Caco-2 (cell line): ENCODE measurements at regions of chr12 and their contacts with region 1.

Region 1: GRCh38 chr12:80925983-80926382 is 11.8 kb downstream of the LIN7A start:
- DNase-seq: no peak
- H3K4me3 ChIP-seq: no peak overlapping the region
- H3K4me3 Mint-ChIP-seq: peak overlapping the region; percentile 0
- H3K27ac Mint-ChIP-seq: no peak overlapping the region
- H3K4me1 ChIP-seq: peaks cover 18% of the 10 kb centered on the region
- H3K4me1 Mint-ChIP-seq: peaks cover 12% of the 10 kb centered on the region
- H3K27me3 ChIP-seq: no peaks in the 10 kb centered on the region
- H3K27me3 Mint-ChIP-seq: no peaks in the 10 kb centered on the region
- CTCF ChIP-seq: no peak

Region 2: GRCh38 chr12:80936498-80937390 is 10.8 kb after region 1 on chr12:
- CTCF ChIA-PET with region 1: no interaction called
- POLR2A ChIA-PET with region 1: no interaction called
- intact Hi-C with region 1: loop called (anchors 1 kb)
- DNase-seq: peak; percentile 42 to 58
- H3K4me3 ChIP-seq: peak overlapping the region; percentile 84
- H3K4me3 Mint-ChIP-seq: peak overlapping the region; percentile 86
- H3K27ac Mint-ChIP-seq: peak overlapping the region; percentile 69
- H3K4me1 ChIP-seq: no peaks in the 10 kb centered on the region
- H3K4me1 Mint-ChIP-seq: peaks cover 7% of the 10 kb centered on the region
- H3K27me3 ChIP-seq: no peaks in the 10 kb centered on the region
- H3K27me3 Mint-ChIP-seq: peaks cover 2% of the 10 kb centered on the region
- CTCF ChIP-seq: peak in 1 of 2 experiments; percentile 3

Region 3: DNA sequence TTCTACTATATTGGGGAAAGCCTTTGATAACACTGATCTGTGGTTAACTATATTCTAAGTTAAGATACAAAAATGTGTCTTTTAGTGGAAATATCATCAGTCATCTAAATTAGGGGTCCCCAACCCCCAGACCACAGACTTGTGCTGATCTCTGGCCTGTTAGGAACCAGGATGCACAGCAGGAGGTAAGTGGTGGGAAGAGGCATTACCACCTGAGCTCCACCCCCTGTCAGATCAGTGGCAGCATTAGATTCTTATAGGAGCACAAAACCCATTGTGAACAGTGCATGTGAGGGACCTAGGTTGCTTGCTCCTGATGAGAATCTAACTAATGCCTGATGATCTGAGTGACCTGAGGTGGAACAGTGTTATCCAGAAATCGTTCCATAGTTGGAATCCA is 40.0 kb after region 1 on chr12:
- CTCF ChIA-PET with region 1: no interaction called
- POLR2A ChIA-PET with region 1: no interaction called
- intact Hi-C with region 1: no loop called
- DNase-seq: no peak
- H3K4me3 ChIP-seq: no peak overlapping the region
- H3K4me3 Mint-ChIP-seq: no peak overlapping the region
- H3K27ac Mint-ChIP-seq: no peak overlapping the region
- H3K4me1 ChIP-seq: no peaks in the 10 kb centered on the region
- H3K4me1 Mint-ChIP-seq: no peaks in the 10 kb centered on the region
- H3K27me3 ChIP-seq: no peaks in the 10 kb centered on the region
- H3K27me3 Mint-ChIP-seq: no peaks in the 10 kb centered on the region
- CTCF ChIP-seq: no peak

Region 4: GRCh38 chr12:81077686-81078441 is 151.9 kb after region 1 on chr12 and contains the start of gene ACSS3:
- CTCF ChIA-PET with region 1: no interaction called
- POLR2A ChIA-PET with region 1: no interaction called
- intact Hi-C with region 1: no loop called
- DNase-seq: no peak
- H3K4me3 ChIP-seq: no peak within 1 kb of the TSS
- H3K4me3 Mint-ChIP-seq: no peak within 1 kb of the TSS
- H3K27ac Mint-ChIP-seq: no peak within 1 kb of the TSS
- H3K4me1 ChIP-seq: no peaks in the 10 kb centered on the region
- H3K4me1 Mint-ChIP-seq: peaks cover 17% of the 10 kb centered on the region
- H3K27me3 ChIP-seq: no peaks in the 10 kb centered on the region
- H3K27me3 Mint-ChIP-seq: no peaks in the 10 kb centered on the region
- CTCF ChIP-seq: no peak
- total RNA-seq, gene ACSS3: 0.70 and 0.95 TPM in 2 replicates

Region 5: GRCh38 chr12:81360916-81361315 is 434.9 kb after region 1 on chr12:
- CTCF ChIA-PET with region 1: no interaction called
- POLR2A ChIA-PET with region 1: no interaction called
- intact Hi-C with region 1: no loop called
- DNase-seq: no peak
- H3K4me3 ChIP-seq: no peak overlapping the region
- H3K4me3 Mint-ChIP-seq: no peak overlapping the region
- H3K27ac Mint-ChIP-seq: no peak overlapping the region
- H3K4me1 ChIP-seq: no peaks in the 10 kb centered on the region
- H3K4me1 Mint-ChIP-seq: no peaks in the 10 kb centered on the region
- H3K27me3 ChIP-seq: no peaks in the 10 kb centered on the region
- H3K27me3 Mint-ChIP-seq: peaks cover 3% of the 10 kb centered on the region
- CTCF ChIP-seq: no peak